Lower leg skin (tissue), 4 donors: ENCODE measurements at regions of chr15 and their contacts with region 1.

Region 1: DNA sequence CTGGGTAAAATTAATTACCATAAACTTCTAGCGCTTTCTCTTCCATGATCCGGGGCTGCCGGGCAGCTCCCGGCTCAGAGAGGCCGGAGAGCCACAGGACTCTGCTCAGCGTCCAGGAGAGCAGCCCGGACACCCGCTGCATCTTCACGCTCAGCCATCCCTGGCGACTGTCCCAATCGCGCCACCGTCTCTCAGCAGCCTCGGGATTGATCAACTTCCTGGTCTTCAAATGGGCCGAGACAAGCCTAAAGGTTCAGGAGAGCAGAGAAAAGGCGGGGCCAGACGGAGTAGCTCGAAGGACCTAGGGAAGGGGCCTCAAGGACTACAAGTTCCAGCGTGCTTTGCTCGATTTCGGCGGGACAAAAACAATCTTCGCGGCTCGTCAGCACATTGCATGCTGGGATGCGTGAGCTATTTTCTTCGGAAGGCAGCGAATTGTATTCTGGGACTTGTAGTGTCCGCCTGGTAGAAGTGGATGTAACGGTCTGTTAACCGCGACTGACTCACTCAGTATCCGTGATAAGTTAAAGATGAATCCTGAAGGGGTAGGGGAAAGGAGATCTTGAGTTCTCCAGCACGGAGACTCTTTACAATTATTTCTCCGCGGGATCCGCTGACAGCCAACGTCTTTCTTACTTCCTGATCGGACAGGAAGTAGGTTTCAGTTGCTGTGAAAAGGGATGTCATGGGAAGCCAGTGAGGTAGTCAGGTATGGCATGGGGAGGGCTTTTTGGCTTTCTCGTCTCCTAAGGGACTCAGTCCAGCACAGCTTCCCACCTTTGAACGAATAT is at the start of gene CIAO2A:
- DNase-seq: peak; percentile 97 to 98
- H3K4me3 ChIP-seq: peak within 1 kb of the TSS; percentile 64
- CTCF ChIP-seq: no peak
- POLR2A ChIP-seq: no peak
- total RNA-seq, gene CIAO2A: 18.7 to 36.8 (median 30.7) TPM

Region 2: DNA sequence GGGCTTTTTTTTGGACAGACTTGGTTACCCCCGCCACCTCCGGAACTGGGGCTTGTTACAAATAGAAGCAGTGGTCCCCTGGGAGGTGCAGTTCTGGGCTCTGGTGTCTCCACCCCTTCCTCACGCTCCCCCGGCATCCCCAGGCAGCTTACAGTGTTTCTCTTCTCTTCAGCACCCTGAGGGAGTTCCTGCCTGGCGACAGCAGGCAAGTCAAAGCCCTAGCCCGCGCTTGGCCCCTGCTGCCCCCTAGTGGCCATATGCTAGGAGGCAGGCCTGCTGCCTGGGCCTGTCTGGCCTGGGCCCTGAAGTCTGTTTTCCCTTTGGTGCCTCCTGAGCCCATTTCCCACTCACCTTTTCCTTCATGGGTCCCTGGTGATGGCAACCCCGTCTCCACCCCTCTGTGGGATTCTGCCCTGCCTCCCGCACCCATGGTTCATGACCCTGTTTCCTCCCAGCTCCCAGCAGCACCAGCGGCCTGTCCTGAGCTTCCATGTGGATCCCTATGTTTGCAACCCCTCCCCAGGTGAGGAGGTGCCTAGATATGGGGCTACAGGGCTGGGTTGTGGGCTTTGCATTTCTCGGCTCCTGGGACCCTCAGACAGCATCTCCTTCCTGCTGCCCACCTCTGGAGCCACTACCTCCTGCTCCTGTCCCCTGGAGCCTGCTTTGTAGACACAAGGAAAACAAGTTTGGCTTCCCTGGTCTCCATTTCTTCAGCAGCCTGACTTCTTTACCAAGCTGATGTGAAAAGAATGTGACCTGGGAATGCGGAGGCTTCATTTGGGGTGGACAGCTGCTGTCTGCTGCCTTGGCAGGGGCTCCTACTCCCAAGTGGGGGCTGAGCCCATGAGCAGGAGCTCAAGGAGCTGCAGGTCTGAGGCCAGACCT is 59.9 kb after region 1 on chr15:
- intact Hi-C with region 1: loop called (anchors 10 kb)
- DNase-seq: peak; percentile 83 to 97
- H3K4me3 ChIP-seq: no peak overlapping the region
- CTCF ChIP-seq: peak in 1 of 3 donors; percentile 69
- POLR2A ChIP-seq: no peak